Caco-2 (cell line): ENCODE measurements at regions of chr14 and their contacts with region 1.

Region 1: GRCh38 chr14:64704143-64704742 is at the start of gene PLEKHG3:
- DNase-seq: peak; percentile 92 to 94
- H3K4me3 ChIP-seq: peak within 1 kb of the TSS; percentile 81
- H3K4me3 Mint-ChIP-seq: peak within 1 kb of the TSS; percentile 83
- H3K27ac Mint-ChIP-seq: peak within 1 kb of the TSS; percentile 85
- H3K4me1 ChIP-seq: peaks cover 40% of the 10 kb centered on the region
- H3K4me1 Mint-ChIP-seq: peaks cover 51% of the 10 kb centered on the region
- H3K27me3 ChIP-seq: no peaks in the 10 kb centered on the region
- H3K27me3 Mint-ChIP-seq: no peaks in the 10 kb centered on the region
- CTCF ChIP-seq: no peak
- total RNA-seq, gene PLEKHG3: 85.9 and 90.8 TPM in 2 replicates

Region 2: DNA sequence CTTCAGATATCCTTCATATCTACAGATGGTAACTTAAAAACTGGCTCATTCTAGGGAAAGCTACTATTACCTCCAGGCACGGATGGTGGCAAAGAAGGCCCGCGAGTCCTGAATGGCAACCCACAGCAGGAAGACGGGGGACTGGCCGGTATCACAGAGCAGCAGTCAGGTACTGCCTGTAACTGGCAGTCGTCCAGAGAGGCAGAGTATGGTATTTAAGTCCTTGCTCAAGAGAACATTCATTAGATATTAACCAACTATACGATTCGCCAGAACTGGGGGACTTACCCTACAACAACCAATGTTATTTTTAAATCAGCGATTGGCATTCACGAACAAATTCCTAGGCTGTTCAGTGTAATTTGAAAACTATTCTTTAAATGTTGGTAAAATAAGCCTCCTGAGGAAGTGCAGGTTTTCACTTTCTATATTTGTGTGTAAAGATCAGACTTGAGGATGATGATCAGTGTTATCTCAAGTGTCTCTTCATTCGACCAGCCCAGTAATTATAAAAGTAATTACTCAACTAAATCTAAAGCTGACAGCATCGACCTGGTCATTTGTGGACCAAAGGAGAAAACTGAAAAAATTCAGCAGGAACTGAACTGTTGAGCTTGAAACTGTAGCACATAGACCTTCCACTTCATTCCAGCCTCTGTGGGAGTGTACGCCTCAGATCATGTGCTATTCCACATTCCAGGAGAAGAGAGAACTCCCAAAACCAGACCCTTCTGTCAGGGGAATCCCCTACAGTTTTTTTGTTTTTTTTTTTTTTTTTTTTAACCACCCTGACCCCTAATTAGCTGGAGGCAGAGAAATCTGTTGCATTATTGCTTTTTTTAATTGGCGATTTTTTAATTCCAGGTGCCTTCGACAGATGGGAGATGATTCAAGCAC is 485.7 kb before region 1 on chr14:
- CTCF ChIA-PET with region 1: no interaction called
- POLR2A ChIA-PET with region 1: no interaction called
- intact Hi-C with region 1: no loop called
- DNase-seq: no peak
- H3K4me3 ChIP-seq: no peak overlapping the region
- H3K4me3 Mint-ChIP-seq: no peak overlapping the region
- H3K27ac Mint-ChIP-seq: no peak overlapping the region
- H3K4me1 ChIP-seq: peaks cover 11% of the 10 kb centered on the region
- H3K4me1 Mint-ChIP-seq: no peaks in the 10 kb centered on the region
- H3K27me3 ChIP-seq: no peaks in the 10 kb centered on the region
- H3K27me3 Mint-ChIP-seq: no peaks in the 10 kb centered on the region
- CTCF ChIP-seq: no peak

Region 3: DNA sequence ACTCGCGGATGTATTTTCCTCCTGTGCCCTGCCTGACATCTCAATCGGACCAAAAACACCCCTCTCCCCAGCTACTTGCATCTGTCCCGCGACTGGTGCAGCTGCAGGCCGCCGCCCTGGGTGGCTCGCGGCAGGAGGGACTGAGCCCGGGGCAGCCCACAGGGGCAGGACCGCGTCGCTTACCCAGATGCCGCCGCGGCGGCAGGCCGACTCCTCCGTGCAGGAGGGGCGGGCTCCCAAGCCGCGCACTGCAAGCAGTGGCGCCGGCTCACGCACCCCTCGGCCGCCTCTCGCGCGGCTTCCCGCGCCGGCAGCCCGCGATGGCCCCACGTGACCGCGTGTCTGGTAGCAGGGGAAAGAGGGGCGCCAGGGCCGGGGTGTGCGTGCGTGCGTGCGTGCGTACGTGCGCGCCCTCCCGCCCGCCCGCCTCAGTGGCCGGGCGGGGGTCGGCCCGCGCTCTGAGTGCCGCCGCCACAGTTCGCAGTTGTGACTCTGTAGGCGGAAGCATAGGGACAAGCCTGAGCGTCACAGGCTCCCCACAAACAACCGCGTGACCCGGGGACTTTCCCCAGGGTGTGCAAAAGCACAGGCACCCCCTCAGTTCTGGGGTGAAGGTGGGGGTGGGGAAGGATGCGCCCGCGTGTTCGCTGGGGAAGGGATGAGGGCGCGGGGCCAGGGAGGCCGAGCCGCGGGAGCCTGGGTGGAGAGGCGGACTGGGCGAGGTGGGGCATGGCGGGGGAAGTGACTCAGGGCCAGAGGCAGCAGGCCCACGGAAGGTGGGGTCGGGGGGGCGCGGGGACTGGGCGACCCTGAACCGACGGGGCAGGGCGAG is 200.5 kb before region 1 on chr14 and contains the start of gene ZBTB25:
- CTCF ChIA-PET with region 1: no interaction called
- POLR2A ChIA-PET with region 1: interaction called, 8 read pairs
- intact Hi-C with region 1: loop called (anchors 1 kb)
- DNase-seq: peak; percentile 93 to 95
- H3K4me3 ChIP-seq: peak within 1 kb of the TSS; percentile 97
- H3K4me3 Mint-ChIP-seq: peak within 1 kb of the TSS; percentile 78
- H3K27ac Mint-ChIP-seq: peak within 1 kb of the TSS; percentile 81
- H3K4me1 ChIP-seq: peaks cover 29% of the 10 kb centered on the region
- H3K4me1 Mint-ChIP-seq: peaks cover 16% of the 10 kb centered on the region
- H3K27me3 ChIP-seq: no peaks in the 10 kb centered on the region
- H3K27me3 Mint-ChIP-seq: no peaks in the 10 kb centered on the region
- CTCF ChIP-seq: no peak
- total RNA-seq, gene ZBTB25: 8.8 and 10.0 TPM in 2 replicates

Region 4: DNA sequence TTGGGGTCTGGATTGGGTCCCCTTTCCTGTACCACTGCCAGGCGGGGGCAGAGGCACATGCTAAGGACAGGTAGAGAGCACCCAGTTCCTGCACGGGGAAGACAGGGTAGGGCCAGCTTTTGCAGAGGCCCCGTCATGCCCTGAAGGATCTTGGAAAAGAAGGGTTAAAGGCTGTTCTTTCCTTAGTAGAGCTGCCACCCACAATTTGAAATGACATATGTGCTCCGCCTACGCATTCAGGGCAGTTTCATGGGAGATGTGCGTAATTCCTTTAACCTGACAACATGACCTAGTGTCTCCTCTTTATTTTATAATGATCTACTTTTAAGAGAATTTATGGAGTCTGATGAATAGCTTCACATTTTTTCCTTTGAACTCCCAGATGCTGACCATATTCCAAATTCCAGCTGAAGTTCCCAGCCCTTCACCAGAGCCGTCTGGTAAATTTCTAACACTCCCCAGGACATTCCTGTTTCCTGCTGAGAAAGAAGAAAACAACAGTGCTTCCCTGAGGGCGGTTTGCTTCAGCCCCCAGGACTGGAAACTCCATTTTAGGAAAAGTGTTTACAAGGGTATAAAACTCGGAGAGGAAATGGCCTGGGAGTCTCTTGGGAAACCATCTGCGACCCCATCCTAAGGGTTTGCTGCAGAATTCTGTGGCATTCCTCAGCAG is 58.9 kb before region 1 on chr14:
- CTCF ChIA-PET with region 1: no interaction called
- POLR2A ChIA-PET with region 1: interaction called, 3 read pairs
- intact Hi-C with region 1: loop called (anchors 2 kb)
- DNase-seq: peak; percentile 74 to 84
- H3K4me3 ChIP-seq: no peak overlapping the region
- H3K4me3 Mint-ChIP-seq: peak overlapping the region; percentile 45
- H3K27ac Mint-ChIP-seq: peak overlapping the region; percentile 99
- H3K4me1 ChIP-seq: peaks cover 78% of the 10 kb centered on the region
- H3K4me1 Mint-ChIP-seq: peaks cover 61% of the 10 kb centered on the region
- H3K27me3 ChIP-seq: no peaks in the 10 kb centered on the region
- H3K27me3 Mint-ChIP-seq: no peaks in the 10 kb centered on the region
- CTCF ChIP-seq: no peak

Region 5: GRCh38 chr14:64681796-64682710 is 22.2 kb before region 1 on chr14:
- CTCF ChIA-PET with region 1: no interaction called
- POLR2A ChIA-PET with region 1: interaction called, 4 read pairs
- intact Hi-C with region 1: loop called (anchors 1 kb)
- DNase-seq: no peak
- H3K4me3 ChIP-seq: no peak overlapping the region
- H3K4me3 Mint-ChIP-seq: no peak overlapping the region
- H3K27ac Mint-ChIP-seq: peak overlapping the region; percentile 50
- H3K4me1 ChIP-seq: peaks cover 26% of the 10 kb centered on the region
- H3K4me1 Mint-ChIP-seq: peaks cover 18% of the 10 kb centered on the region
- H3K27me3 ChIP-seq: no peaks in the 10 kb centered on the region
- H3K27me3 Mint-ChIP-seq: no peaks in the 10 kb centered on the region
- CTCF ChIP-seq: no peak

Region 6: DNA sequence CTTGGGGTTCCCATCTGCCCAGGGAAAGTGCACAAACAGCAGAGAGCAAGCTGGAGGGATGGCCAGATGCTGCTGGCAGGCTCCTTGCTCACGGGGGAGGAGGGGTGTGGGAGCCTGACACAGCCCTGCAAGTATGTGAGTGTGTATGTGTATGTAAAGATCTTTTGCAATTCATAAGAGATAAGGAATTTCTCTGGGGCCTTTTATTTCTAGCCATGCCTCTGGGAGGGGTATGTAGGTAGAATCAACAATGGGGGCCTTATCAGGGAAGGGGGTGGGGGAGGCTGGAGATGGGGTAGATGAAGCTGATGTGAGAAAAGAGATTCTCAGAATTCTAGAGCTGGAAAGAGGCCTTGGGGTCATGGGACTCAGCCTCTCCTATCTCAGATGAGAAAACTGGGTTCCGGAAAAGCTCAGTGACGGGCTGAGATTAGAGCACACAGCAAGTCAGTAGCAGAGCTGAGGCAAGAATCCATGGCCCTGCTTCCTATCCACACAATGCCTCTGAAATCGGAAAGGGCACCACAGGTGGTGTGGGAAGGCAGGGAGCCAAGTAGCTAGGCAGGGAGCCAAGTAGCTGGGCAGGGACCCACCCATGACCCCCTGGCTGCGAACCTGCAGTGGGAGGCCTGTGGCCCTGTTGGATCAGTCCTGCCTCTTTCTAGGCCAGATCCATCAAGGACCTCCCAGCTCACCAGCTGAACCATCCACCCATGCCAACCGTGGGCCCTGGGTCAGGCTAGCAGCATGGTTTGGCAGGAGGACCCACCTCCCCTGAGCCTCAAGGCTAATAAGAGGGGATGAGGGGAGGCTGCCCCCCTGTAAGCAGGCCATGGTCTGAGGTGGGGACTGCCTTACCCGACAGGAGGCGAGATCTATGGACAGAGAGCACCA is 54.7 kb after region 1 on chr14:
- CTCF ChIA-PET with region 1: interaction called, 8 read pairs
- POLR2A ChIA-PET with region 1: interaction called, 8 read pairs
- intact Hi-C with region 1: loop called (anchors 1 kb)
- DNase-seq: peak; percentile 91 to 94
- H3K4me3 ChIP-seq: no peak overlapping the region
- H3K4me3 Mint-ChIP-seq: peak overlapping the region; percentile 51
- H3K27ac Mint-ChIP-seq: peak overlapping the region; percentile 92
- H3K4me1 ChIP-seq: peaks cover 83% of the 10 kb centered on the region
- H3K4me1 Mint-ChIP-seq: peaks cover 75% of the 10 kb centered on the region
- H3K27me3 ChIP-seq: no peaks in the 10 kb centered on the region
- H3K27me3 Mint-ChIP-seq: no peaks in the 10 kb centered on the region
- CTCF ChIP-seq: no peak

Region 7: DNA sequence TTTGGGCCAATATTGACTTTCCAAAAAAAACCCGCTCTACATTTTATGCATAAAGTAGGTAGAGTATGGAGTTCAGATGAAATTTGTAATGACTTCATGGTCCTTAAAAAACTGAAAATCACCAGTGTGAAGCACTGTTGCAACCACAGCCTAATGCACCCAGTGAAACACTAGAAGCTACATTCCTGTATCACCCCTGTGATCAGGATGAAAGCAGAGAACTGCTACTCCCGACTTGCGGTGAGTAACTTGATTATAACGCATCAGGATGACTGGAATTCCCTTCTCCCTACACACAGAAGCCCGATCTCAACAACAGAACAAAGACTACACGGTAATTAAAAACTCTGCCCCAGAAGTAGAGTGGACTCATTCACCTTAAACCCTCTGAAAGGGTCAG is 141.6 kb after region 1 on chr14:
- CTCF ChIA-PET with region 1: no interaction called
- POLR2A ChIA-PET with region 1: no interaction called
- intact Hi-C with region 1: no loop called
- DNase-seq: no peak
- H3K4me3 ChIP-seq: no peak overlapping the region
- H3K4me3 Mint-ChIP-seq: no peak overlapping the region
- H3K27ac Mint-ChIP-seq: no peak overlapping the region
- H3K4me1 ChIP-seq: 0 out of 2 replicates have a peak, but pooled peaks cover 5% of the 10 kb centered on the region
- H3K4me1 Mint-ChIP-seq: peaks cover 7% of the 10 kb centered on the region
- H3K27me3 ChIP-seq: no peaks in the 10 kb centered on the region
- H3K27me3 Mint-ChIP-seq: peaks cover 15% of the 10 kb centered on the region
- CTCF ChIP-seq: no peak

Region 8: DNA sequence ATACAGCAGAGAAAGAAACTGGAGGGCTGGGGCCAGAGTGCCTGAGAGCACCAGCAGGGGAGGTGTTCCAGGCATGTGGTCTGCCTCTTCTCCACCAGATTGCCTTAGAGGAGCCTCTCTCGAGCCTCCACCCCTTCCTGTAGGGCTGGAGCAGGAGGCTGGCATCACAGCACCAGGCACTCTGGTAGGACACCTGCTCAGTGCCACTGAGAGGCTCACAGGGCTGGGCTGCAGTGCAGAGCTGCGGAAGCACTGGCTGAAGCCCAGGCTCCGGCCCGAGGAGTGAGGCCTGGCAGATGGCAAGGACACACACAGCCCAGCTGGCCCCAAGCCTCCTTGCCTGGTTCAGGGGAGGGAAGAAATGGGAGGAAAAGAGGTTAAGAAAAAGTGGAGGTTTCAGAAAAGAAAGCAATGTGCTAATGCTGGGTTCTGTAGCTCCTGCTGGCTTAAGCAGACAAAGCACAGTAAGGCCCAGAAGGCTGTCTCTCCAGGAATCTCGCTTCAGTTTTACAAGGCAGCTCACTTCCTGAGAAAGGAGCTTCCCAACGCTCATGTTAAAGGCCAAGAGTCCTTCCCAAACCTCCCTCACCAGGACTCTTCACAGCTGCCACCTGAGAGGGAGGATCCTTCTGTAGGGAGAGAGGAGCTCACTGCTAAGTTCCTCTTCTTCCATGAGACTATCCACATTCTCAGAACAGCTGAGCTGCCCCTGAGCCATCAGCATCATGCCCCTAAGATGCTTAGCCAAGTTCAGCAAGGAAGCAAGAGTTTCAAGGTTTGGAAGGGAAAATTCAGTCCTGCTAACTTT is 151.7 kb after region 1 on chr14:
- CTCF ChIA-PET with region 1: no interaction called
- POLR2A ChIA-PET with region 1: no interaction called
- intact Hi-C with region 1: no loop called
- DNase-seq: no peak
- H3K4me3 ChIP-seq: no peak overlapping the region
- H3K4me3 Mint-ChIP-seq: no peak overlapping the region
- H3K27ac Mint-ChIP-seq: no peak overlapping the region
- H3K4me1 ChIP-seq: no peaks in the 10 kb centered on the region
- H3K4me1 Mint-ChIP-seq: peaks cover 6% of the 10 kb centered on the region
- H3K27me3 ChIP-seq: no peaks in the 10 kb centered on the region
- H3K27me3 Mint-ChIP-seq: peaks cover 8% of the 10 kb centered on the region
- CTCF ChIP-seq: no peak

Region 9: DNA sequence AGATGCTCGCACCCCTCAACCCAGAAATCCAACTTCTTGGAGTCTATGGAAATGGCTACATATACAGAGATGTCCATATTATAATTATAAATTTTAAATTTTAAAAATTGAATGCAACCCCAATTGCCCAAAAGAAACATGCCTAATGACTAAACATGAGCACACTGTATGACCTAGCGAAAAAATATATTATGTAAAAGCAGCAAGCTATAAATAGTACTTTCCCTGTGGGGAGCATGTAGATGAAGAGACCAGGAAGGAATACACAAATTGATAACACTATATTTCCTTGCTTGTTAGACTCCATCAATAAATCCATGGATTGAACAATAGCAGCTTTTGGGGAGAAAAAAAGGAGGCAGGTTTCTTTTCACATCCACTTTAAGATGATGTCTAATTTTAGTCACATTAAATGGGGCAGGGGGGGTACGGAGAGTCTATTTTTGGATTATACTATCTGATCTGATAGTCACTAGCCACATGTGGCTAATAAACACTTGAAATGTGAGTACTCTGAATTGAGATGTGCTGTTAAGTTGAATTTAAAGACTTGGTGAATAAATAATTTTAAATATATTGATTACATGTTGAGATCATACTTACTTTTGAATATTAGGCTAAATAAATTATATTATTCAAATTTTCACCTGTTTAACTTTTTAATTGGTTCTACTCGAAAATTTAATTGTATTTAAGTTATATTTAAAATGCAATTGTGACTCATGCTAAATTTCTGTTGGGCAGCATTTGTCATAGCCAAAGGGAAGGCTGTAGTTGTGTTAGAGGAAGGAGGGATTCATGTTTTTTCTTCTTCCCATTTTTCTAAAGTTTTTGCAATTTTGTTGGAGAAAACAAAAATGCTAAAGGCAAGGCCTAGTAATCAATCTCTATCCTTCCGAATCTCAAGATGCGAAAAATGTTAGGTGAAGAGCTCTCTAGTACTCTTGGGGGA is 380.6 kb after region 1 on chr14:
- CTCF ChIA-PET with region 1: no interaction called
- POLR2A ChIA-PET with region 1: no interaction called
- intact Hi-C with region 1: no loop called
- DNase-seq: no peak
- H3K4me3 ChIP-seq: no peak overlapping the region
- H3K4me3 Mint-ChIP-seq: no peak overlapping the region
- H3K27ac Mint-ChIP-seq: no peak overlapping the region
- H3K4me1 ChIP-seq: peaks cover 11% of the 10 kb centered on the region; the same call in 1 of the 2 replicates
- H3K4me1 Mint-ChIP-seq: no peaks in the 10 kb centered on the region
- H3K27me3 ChIP-seq: no peaks in the 10 kb centered on the region
- H3K27me3 Mint-ChIP-seq: no peaks in the 10 kb centered on the region
- CTCF ChIP-seq: no peak